HCT116 (cell line): ENCODE measurements at regions of chr1 and their contacts with region 1.

Region 1: GRCh38 chr1:153990468-153991150 is at the start of gene RPS27:
- DNase-seq: peak; percentile 98
- ATAC-seq: peak; percentile 51
- H3K4me3 ChIP-seq: peak within 1 kb of the TSS; percentile 89 to 96
- H3K27ac ChIP-seq: peak within 1 kb of the TSS; percentile 80
- H3K4me1 ChIP-seq: peaks cover 7 to 37% of the 10 kb centered on the region in 2 experiments
- H3K27me3 ChIP-seq: no peaks in the 10 kb centered on the region
- CTCF ChIP-seq: no peak
- POLR2A ChIP-seq: peak; percentile 99
- RAD21 ChIP-seq: no peak
- total RNA-seq, gene RPS27: 1,905 TPM

Region 2: GRCh38 chr1:153510984-153511410 is 479.6 kb before region 1 on chr1:
- CTCF ChIA-PET with region 1: interaction called, 8 read pairs
- POLR2A ChIA-PET with region 1: no interaction called
- RAD21 ChIA-PET with region 1: no interaction called
- intact Hi-C with region 1: loop called (anchors 5 kb)
- DNase-seq: peak; percentile 70
- ATAC-seq: peak; percentile 78
- H3K4me3 ChIP-seq: no peak overlapping the region
- H3K27ac ChIP-seq: peak overlapping the region; percentile 39
- H3K4me1 ChIP-seq: peaks cover 34 to 91% of the 10 kb centered on the region in 2 experiments
- H3K27me3 ChIP-seq: no peaks in the 10 kb centered on the region
- CTCF ChIP-seq: peak; percentile 90 to 95 (median 92)
- POLR2A ChIP-seq: no peak
- RAD21 ChIP-seq: peak; percentile 100

Region 3: DNA sequence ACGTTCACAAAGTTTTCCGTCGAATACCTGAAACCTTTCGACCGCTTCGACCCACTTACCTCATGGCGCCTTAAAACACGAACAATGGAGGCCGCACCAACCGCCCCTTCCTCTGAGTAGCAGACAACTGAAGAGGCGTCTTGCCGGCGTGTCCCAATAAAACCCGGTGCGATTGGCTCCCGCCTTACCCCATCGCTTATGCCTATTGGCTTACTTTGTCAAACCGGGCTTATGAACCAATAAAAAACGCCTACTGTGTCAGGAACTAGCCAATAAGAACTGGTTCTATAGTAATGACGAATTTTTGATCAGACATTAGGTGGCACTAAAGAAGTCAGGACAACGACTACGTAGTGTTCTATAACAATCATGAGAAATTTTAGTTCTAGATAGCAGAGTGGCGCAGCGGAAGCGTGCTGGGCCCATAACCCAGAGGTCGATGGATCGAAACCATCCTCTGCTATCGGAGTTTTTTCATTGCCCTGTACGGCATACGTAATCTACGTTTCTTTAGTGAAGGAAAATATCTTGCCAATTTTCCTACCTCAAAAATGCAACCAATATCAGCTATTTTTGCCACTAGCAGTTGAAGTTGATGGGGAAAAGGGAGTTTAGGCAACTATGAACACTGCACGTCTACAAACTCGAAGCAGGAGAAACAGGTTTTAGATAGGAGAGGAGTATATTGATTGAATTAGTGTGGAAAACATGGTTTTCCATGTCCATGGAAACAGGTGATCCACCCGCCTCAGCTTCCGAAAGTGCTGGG is 319.6 kb before region 1 on chr1 and contains the start of gene ILF2:
- CTCF ChIA-PET with region 1: interaction called, 5 read pairs
- POLR2A ChIA-PET with region 1: interaction called, 10 read pairs
- RAD21 ChIA-PET with region 1: interaction called, 3 read pairs
- intact Hi-C with region 1: no loop called
- DNase-seq: peak; percentile 99
- ATAC-seq: peak; percentile 86
- H3K4me3 ChIP-seq: peak within 1 kb of the TSS; percentile 73 to 97
- H3K27ac ChIP-seq: peak within 1 kb of the TSS; percentile 80
- H3K4me1 ChIP-seq: peaks cover 10 to 24% of the 10 kb centered on the region in 2 experiments
- H3K27me3 ChIP-seq: no peaks in the 10 kb centered on the region
- CTCF ChIP-seq: no peak; a peak in 1 of 6 replicates
- POLR2A ChIP-seq: peak; percentile 84
- RAD21 ChIP-seq: peak; percentile 21; the same call in 1 of the 2 replicates
- total RNA-seq, gene ILF2: 335 TPM

Region 4: GRCh38 chr1:153796791-153797659 is 193.6 kb before region 1 on chr1:
- CTCF ChIA-PET with region 1: interaction called, 17 read pairs
- POLR2A ChIA-PET with region 1: interaction called, 5 read pairs
- RAD21 ChIA-PET with region 1: interaction called, 4 to 10 read pairs
- intact Hi-C with region 1: loop called (anchors 1 kb)
- DNase-seq: peak; percentile 42
- ATAC-seq: peak; percentile 93
- H3K4me3 ChIP-seq: no peak overlapping the region
- H3K27ac ChIP-seq: no peak overlapping the region
- H3K4me1 ChIP-seq: peaks cover 0 to 2% of the 10 kb centered on the region in 2 experiments; a peak in 1 of 4 replicates
- H3K27me3 ChIP-seq: no peaks in the 10 kb centered on the region
- CTCF ChIP-seq: peak; percentile 80 to 86 (median 82)
- POLR2A ChIP-seq: no peak
- RAD21 ChIP-seq: peak; percentile 93

Region 5: GRCh38 chr1:153866045-153866850 is 124.4 kb before region 1 on chr1:
- CTCF ChIA-PET with region 1: no interaction called
- POLR2A ChIA-PET with region 1: no interaction called
- RAD21 ChIA-PET with region 1: no interaction called
- intact Hi-C with region 1: no loop called
- DNase-seq: no peak
- ATAC-seq: no peak
- H3K4me3 ChIP-seq: no peak overlapping the region
- H3K27ac ChIP-seq: no peak overlapping the region
- H3K4me1 ChIP-seq: no peaks in the 10 kb centered on the region
- H3K27me3 ChIP-seq: no peaks in the 10 kb centered on the region
- CTCF ChIP-seq: no peak
- POLR2A ChIP-seq: no peak
- RAD21 ChIP-seq: no peak

Region 6: GRCh38 chr1:153946622-153947241 is 43.9 kb before region 1 on chr1 and contains the start of gene DENND4B:
- CTCF ChIA-PET with region 1: interaction called, 7 read pairs
- POLR2A ChIA-PET with region 1: no interaction called
- RAD21 ChIA-PET with region 1: no interaction called
- intact Hi-C with region 1: loop called (anchors 2 kb)
- DNase-seq: no peak
- ATAC-seq: peak; percentile 89
- H3K4me3 ChIP-seq: peak within 1 kb of the TSS; percentile 83 to 91
- H3K27ac ChIP-seq: peak within 1 kb of the TSS; percentile 98
- H3K4me1 ChIP-seq: peaks cover 6 to 18% of the 10 kb centered on the region in 2 experiments; a peak in 3 of 4 replicates
- H3K27me3 ChIP-seq: no peaks in the 10 kb centered on the region
- CTCF ChIP-seq: peak; percentile 69 to 95 (median 81)
- POLR2A ChIP-seq: no peak
- RAD21 ChIP-seq: peak; percentile 53
- total RNA-seq, gene DENND4B: 70.8 TPM

Region 7: DNA sequence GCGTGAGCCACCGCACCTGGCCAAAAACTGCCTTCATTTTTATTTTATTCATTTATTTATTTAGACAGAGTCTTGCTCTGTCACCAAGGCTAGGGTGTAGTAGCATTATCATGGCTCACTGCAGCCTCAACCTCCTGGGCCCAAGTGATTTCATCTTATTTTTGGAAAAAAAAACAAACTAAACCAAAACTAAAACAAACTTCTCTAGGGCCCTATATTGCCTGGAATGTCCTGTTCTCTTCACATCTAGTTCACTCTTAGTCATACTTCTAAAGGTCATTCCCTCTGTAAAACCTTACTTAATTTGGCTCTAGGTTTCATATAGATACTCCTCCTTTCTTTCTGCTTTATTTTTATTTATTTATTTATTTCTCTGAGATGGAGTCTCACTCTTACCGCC is 15.5 kb after region 1 on chr1:
- CTCF ChIA-PET with region 1: no interaction called
- POLR2A ChIA-PET with region 1: interaction called, 10 read pairs
- RAD21 ChIA-PET with region 1: no interaction called
- intact Hi-C with region 1: no loop called
- DNase-seq: no peak
- ATAC-seq: no peak
- H3K4me3 ChIP-seq: no peak overlapping the region
- H3K27ac ChIP-seq: no peak overlapping the region
- H3K4me1 ChIP-seq: peaks cover 7 to 16% of the 10 kb centered on the region in 2 experiments
- H3K27me3 ChIP-seq: no peaks in the 10 kb centered on the region
- CTCF ChIP-seq: no peak
- POLR2A ChIP-seq: no peak
- RAD21 ChIP-seq: no peak

Region 8: GRCh38 chr1:154791292-154792166 is 800.9 kb after region 1 on chr1:
- CTCF ChIA-PET with region 1: no interaction called
- POLR2A ChIA-PET with region 1: no interaction called
- RAD21 ChIA-PET with region 1: no interaction called
- intact Hi-C with region 1: no loop called
- DNase-seq: peak; percentile 21
- ATAC-seq: peak; percentile 96
- H3K4me3 ChIP-seq: peak overlapping the region; percentile 8 to 24; a peak in 3 of 4 replicates
- H3K27ac ChIP-seq: no peak overlapping the region
- H3K4me1 ChIP-seq: peaks cover 8 to 10% of the 10 kb centered on the region in 2 experiments; a peak in 3 of 4 replicates
- H3K27me3 ChIP-seq: peaks cover 12% of the 10 kb centered on the region; the same call in 1 of the 2 replicates
- CTCF ChIP-seq: peak in 2 of 3 experiments; percentile 36 to 42; a peak in 4 of 6 replicates
- POLR2A ChIP-seq: no peak
- RAD21 ChIP-seq: no peak